ENCODE measurements at regions of chr1 and their contacts with region 1.

Region 1: DNA sequence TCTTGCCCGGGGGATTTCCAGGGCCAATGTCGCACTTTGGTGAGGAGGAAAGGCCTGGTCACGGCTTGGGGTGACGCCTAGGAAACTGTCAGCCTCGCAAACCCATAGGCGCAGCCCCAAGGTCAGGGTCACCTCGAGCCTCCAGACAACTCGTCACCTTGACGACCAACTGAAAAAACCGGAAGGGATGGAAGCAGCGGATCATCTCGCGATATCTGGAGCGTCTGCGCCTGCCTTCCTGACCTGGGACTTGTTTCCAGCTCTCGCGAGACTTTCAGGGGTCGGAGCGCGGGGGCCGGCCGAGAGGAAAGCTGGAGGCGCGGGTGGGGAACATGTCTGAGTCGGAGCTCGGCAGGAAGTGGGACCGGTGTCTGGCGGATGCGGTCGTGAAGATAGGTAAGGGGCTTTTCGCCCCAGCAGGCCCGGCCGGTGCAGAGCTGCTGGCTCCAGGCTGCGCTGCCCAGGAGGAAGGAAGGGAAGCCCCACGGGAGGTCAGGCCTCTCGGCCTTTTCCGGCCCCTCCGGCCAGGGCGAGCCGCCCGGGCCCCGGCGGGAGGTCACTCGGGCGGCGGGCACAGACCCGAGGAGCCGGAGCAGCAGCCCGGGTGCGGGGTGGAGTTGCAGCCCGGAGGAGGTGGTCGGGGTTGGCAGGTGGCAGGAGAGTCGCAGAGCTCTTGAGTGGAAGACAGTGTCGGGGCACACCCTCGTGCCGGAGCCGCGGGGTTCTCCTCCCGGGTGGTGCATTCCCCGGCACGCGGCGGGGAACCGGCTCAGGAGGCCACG is 47.2 kb upstream of the NBL1 start:
- DNase-seq: peak; percentile 98 to 100 (median 99)
- H3K4me3 ChIP-seq: peak overlapping the region; percentile 43 to 86 (median 73)
- H3K27ac ChIP-seq: peak overlapping the region; percentile 98
- H3K4me1 ChIP-seq: peaks cover 10 to 44% (median 26%) of the 10 kb centered on the region in 4 experiments
- H3K27me3 ChIP-seq: no peaks in the 10 kb centered on the region

Region 2: DNA sequence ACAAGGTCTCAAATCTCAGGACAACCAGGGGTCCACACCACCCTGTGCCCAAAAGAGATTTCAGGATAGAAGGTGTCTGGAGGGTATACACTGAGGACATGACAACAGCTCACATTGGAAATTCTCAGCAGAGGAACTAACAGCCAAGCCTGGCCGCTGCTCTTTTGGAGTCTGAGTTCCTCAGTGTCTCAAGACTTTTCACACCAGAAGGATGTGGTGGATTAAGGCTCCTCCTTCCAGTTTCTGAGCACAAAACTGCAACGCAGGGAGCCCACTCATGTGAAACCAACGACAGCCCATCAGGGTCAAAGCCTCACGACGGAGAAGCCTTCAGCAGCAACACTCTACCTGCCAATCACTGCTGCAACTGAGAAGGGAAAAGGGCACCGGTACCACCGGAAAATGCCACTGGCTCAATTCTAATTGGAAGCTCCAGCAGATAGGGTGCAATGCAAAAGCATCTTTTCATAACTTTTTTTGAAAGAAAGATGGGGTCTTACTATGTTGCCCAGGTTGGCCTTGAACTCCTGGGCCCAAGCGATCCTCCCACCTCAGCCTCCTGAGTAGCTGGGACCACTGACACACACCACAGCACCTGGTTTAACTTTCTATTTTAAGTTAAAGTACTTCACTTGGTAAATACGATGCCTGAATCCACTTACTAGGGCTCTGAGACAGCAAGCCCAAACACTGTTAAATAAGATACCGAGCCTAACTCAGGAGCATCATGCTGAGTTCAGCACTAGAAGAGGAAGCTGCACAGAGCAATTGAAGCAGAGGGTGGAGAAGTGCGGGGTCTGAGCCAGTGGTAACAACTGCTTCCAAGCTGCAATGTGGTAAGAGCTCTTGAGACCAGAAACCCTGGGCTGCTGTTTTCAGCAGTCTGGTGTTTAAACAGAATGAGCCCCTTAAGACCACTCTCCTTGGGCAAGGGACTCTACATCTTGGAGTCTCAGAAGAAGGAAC is 119.3 kb before region 1 on chr1:
- CTCF ChIA-PET with region 1: interaction called, 3 read pairs
- POLR2A ChIA-PET with region 1: interaction called, 17 read pairs
- DNase-seq: peak; percentile 56 to 91 (median 90)
- H3K4me3 ChIP-seq: peak overlapping the region in 6 of 7 experiments; percentile 32 to 70 (median 46)
- H3K27ac ChIP-seq: peak overlapping the region; percentile 87 to 88
- H3K4me1 ChIP-seq: peaks cover 46 to 92% (median 84%) of the 10 kb centered on the region in 4 experiments
- H3K27me3 ChIP-seq: no peaks in the 10 kb centered on the region

Region 3: DNA sequence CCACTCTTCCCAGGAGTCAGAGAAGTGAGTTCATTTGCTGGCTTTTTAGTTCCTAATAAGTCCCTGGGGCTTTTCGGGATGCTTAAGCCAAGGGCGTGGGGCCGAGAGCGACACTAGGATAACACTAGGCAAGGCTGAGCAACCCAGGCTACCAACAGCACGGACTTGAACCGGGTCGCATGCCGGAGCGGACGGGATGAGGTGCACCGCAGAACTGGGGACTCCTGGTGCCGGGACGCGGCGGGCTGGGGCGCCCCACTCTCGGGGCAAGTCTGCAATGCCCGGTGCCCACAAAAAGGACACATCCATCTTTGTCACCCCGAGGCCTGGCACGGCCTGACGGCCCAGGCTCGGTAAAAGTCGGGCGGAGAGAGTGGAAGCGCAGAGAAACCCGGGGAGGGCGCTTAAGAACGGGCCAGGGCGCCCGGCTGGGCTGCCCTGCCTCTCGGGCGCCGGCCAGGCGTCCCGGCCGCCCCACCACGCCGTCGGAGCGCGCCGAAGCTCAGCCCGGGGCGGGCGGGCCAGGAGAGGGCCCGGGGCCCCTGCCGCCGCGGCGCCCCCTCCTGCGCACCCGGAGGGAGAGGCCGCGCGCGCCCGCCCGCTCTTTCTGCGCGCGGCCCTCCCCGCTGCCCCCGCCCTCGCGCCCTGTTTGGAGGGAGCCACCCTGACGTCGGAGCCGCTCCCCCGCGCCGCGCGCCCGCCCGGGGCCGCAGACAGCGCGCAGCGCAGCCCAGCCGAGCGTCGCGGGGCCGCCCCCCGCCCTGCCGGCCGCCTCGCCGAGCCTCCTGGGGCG is 46.9 kb after region 1 on chr1 and contains the start of gene NBL1:
- CTCF ChIA-PET with region 1: interaction called, 3 read pairs
- POLR2A ChIA-PET with region 1: interaction called, 48 read pairs
- DNase-seq: peak; percentile 55 to 82 (median 82)
- H3K4me3 ChIP-seq: peak within 1 kb of the TSS; percentile 57 to 89 (median 72)
- H3K27ac ChIP-seq: peak within 1 kb of the TSS; percentile 54 to 68
- H3K4me1 ChIP-seq: peaks cover 0 to 51% (median 44%) of the 10 kb centered on the region in 4 experiments
- H3K27me3 ChIP-seq: peaks cover 0 to 12% (median 0%) of the 10 kb centered on the region in 5 experiments

Measured in common myeloid progenitor, CD34-positive (primary cell).